ENCODE measurements at regions of chr3 and their contacts with region 1.

Region 1: GRCh38 chr3:37321377-37321781 is 147.0 kb upstream of the LRRFIP2 start:
- DNase-seq: no peak
- ATAC-seq: no peak
- H3K4me3 ChIP-seq: no peak overlapping the region
- H3K4me3 Mint-ChIP-seq: peak overlapping the region in 1 of 10 donors; percentile 36
- H3K27ac ChIP-seq: no peak overlapping the region
- H3K27ac Mint-ChIP-seq: peak overlapping the region in 1 of 9 donors; percentile 11
- H3K4me1 ChIP-seq: peaks cover 0 to 5% of the 10 kb centered on the region in 2 donors
- H3K4me1 Mint-ChIP-seq: peaks cover 4 to 29% (median 9%) of the 10 kb centered on the region in 7 donors
- H3K27me3 ChIP-seq: no peaks in the 10 kb centered on the region
- H3K27me3 Mint-ChIP-seq: no peaks in the 10 kb centered on the region

Region 2: GRCh38 chr3:35965908-35966307 is 1355.5 kb before region 1 on chr3:
- CTCF ChIA-PET with region 1: no interaction called
- POLR2A ChIA-PET with region 1: no interaction called
- intact Hi-C with region 1: no loop called
- DNase-seq: peak in 2 of 9 donors; percentile 0 to 5
- ATAC-seq: no peak
- H3K4me3 ChIP-seq: no peak overlapping the region
- H3K4me3 Mint-ChIP-seq: no peak overlapping the region
- H3K27ac ChIP-seq: no peak overlapping the region
- H3K27ac Mint-ChIP-seq: no peak overlapping the region
- H3K4me1 ChIP-seq: no peaks in the 10 kb centered on the region
- H3K4me1 Mint-ChIP-seq: peaks cover 0 to 27% (median 5%) of the 10 kb centered on the region in 7 donors
- H3K27me3 ChIP-seq: no peaks in the 10 kb centered on the region
- H3K27me3 Mint-ChIP-seq: no peaks in the 10 kb centered on the region

Region 3: GRCh38 chr3:36924744-36925521 is 396.4 kb before region 1 on chr3:
- CTCF ChIA-PET with region 1: no interaction called
- POLR2A ChIA-PET with region 1: no interaction called
- intact Hi-C with region 1: no loop called
- DNase-seq: no peak
- ATAC-seq: no peak
- H3K4me3 ChIP-seq: no peak overlapping the region
- H3K4me3 Mint-ChIP-seq: peak overlapping the region in 1 of 10 donors; percentile 20
- H3K27ac ChIP-seq: no peak overlapping the region
- H3K27ac Mint-ChIP-seq: peak overlapping the region in 4 of 9 donors; percentile 26 to 67 (median 32)
- H3K4me1 ChIP-seq: no peaks in the 10 kb centered on the region
- H3K4me1 Mint-ChIP-seq: peaks cover 0 to 25% (median 21%) of the 10 kb centered on the region in 7 donors
- H3K27me3 ChIP-seq: no peaks in the 10 kb centered on the region
- H3K27me3 Mint-ChIP-seq: peaks cover 0 to 6% (median 0%) of the 10 kb centered on the region in 5 donors

Region 4: GRCh38 chr3:37310666-37311050 is 10.7 kb before region 1 on chr3:
- CTCF ChIA-PET with region 1: no interaction called
- POLR2A ChIA-PET with region 1: no interaction called
- intact Hi-C with region 1: loop called in 1 of 2 experiments (anchors 1 kb)
- DNase-seq: no peak
- ATAC-seq: no peak
- H3K4me3 ChIP-seq: no peak overlapping the region
- H3K4me3 Mint-ChIP-seq: peak overlapping the region in 3 of 10 donors; percentile 9 to 39 (median 25)
- H3K27ac ChIP-seq: no peak overlapping the region
- H3K27ac Mint-ChIP-seq: peak overlapping the region in 7 of 9 donors; percentile 32 to 88 (median 62)
- H3K4me1 ChIP-seq: no peaks in the 10 kb centered on the region
- H3K4me1 Mint-ChIP-seq: peaks cover 12 to 25% (median 21%) of the 10 kb centered on the region in 7 donors
- H3K27me3 ChIP-seq: no peaks in the 10 kb centered on the region
- H3K27me3 Mint-ChIP-seq: no peaks in the 10 kb centered on the region

Measured in naive thymus-derived CD4-positive, alpha-beta T cell (primary cell).